Endothelial cell of umbilical vein (primary cell): ENCODE measurements at regions of chr1 and their contacts with region 1.

Region 1: GRCh38 chr1:203216274-203217138 is 13.0 kb downstream of the CHIT1 start:
- DNase-seq: peak; percentile 74
- H3K4me3 ChIP-seq: no peak overlapping the region
- H3K27ac ChIP-seq: no peak overlapping the region
- H3K4me1 ChIP-seq: no peaks in the 10 kb centered on the region
- H3K27me3 ChIP-seq: peaks cover 1 to 6% of the 10 kb centered on the region in 2 experiments
- CTCF ChIP-seq: peak; percentile 61 to 68
- POLR2A ChIP-seq: no peak

Region 2: DNA sequence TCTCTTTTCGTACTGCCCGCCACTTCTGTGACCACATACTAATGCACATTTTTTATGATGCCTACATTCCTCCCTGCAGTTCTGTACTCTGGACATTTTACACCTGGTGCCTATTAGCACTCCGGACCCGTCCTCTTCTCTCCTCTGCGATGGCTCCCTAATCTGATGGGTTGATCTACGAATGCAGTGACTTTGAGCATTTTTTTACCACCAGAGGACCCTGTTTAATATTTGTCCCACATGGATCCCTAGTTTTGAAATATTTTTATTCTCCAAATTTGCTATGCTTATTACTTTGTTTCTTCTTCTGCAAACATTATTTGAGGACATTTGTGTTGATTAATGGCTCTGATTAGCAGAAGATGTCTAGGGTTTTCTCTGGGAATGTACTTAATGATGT is 185.0 kb before region 1 on chr1:
- CTCF ChIA-PET with region 1: interaction called, 42 read pairs
- POLR2A ChIA-PET with region 1: no interaction called
- dilution Hi-C with region 1: no loop called
- intact Hi-C with region 1: no loop called
- DNase-seq: no peak
- H3K4me3 ChIP-seq: no peak overlapping the region
- H3K27ac ChIP-seq: no peak overlapping the region
- H3K4me1 ChIP-seq: peaks cover 5% of the 10 kb centered on the region
- H3K27me3 ChIP-seq: peaks cover 19 to 31% of the 10 kb centered on the region in 2 experiments
- CTCF ChIP-seq: peak; percentile 11 to 31
- POLR2A ChIP-seq: no peak

Region 3: GRCh38 chr1:203084588-203085502 is 131.7 kb before region 1 on chr1:
- CTCF ChIA-PET with region 1: interaction called, 26 read pairs
- POLR2A ChIA-PET with region 1: no interaction called
- dilution Hi-C with region 1: no loop called
- intact Hi-C with region 1: no loop called
- DNase-seq: no peak
- H3K4me3 ChIP-seq: no peak overlapping the region
- H3K27ac ChIP-seq: no peak overlapping the region
- H3K4me1 ChIP-seq: no peaks in the 10 kb centered on the region
- H3K27me3 ChIP-seq: peaks cover 6 to 10% of the 10 kb centered on the region in 2 experiments
- CTCF ChIP-seq: peak; percentile 48 to 50
- POLR2A ChIP-seq: no peak

Region 4: DNA sequence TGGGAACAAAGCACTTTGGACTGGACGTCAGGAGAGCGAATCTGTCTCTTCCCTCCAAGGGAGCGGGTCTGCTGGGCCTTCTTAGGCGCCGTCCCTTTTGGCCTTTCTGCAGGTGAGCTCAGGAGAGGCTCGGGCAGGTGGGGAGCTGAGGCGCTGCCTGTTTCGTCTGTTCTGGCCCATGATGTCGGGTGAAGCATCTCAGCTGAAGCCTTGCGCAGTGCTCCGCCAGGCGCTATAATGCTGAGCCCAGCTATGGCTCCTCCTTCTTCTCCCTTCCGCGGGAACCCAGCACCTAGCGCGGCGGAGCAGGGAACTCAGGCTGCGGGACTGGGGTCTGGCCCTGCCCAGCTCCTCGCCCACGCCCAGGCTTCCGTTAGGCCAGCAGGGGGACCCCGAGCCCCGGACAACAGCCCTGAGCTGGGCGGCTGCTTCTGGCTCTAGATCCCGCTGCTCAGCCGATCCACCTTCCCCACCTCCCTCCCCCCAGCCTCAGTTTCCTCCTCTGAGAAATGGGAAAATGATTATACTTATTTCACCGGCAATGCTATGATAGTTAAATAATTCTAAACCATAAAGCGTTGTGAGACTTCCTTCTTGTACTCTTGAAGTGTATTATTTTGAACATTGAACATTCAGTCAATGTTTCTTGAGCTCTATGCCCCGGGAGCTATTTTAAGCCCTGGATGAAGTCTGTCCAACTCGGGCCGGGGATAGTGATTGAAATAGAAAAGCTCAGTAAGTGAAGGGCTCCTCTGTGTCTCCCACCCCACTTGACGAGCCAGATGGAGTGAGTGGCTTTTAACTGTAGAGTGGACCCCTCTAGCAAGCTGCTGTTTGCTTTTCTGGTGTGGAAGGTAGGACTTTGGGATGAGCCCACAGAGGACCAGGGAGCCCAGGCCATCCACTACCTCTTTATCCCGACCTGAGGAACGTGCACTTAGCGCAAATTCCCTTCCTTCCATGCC is 98.6 kb before region 1 on chr1:
- CTCF ChIA-PET with region 1: interaction called, 341 read pairs
- POLR2A ChIA-PET with region 1: interaction called, 3 read pairs
- dilution Hi-C with region 1: no loop called
- intact Hi-C with region 1: loop called (anchors 1 kb)
- DNase-seq: peak; percentile 51
- H3K4me3 ChIP-seq: no peak overlapping the region
- H3K27ac ChIP-seq: no peak overlapping the region
- H3K4me1 ChIP-seq: no peaks in the 10 kb centered on the region
- H3K27me3 ChIP-seq: peaks cover 19 to 29% of the 10 kb centered on the region in 2 experiments
- CTCF ChIP-seq: peak; percentile 70 to 95
- POLR2A ChIP-seq: no peak

Region 5: GRCh38 chr1:203172128-203173010 is 44.1 kb before region 1 on chr1:
- CTCF ChIA-PET with region 1: interaction called, 37 read pairs
- POLR2A ChIA-PET with region 1: no interaction called
- dilution Hi-C with region 1: no loop called
- intact Hi-C with region 1: loop called (anchors 1 kb)
- DNase-seq: peak; percentile 51
- H3K4me3 ChIP-seq: no peak overlapping the region
- H3K27ac ChIP-seq: no peak overlapping the region
- H3K4me1 ChIP-seq: no peaks in the 10 kb centered on the region
- H3K27me3 ChIP-seq: no peaks in the 10 kb centered on the region
- CTCF ChIP-seq: peak; percentile 84 to 96
- POLR2A ChIP-seq: no peak

Region 6: GRCh38 chr1:203229471-203230135 is 13.1 kb after region 1 on chr1 and contains the start of gene CHIT1:
- CTCF ChIA-PET with region 1: interaction called, 20 read pairs
- POLR2A ChIA-PET with region 1: no interaction called
- dilution Hi-C with region 1: no loop called
- intact Hi-C with region 1: no loop called
- DNase-seq: no peak
- H3K4me3 ChIP-seq: no peak within 1 kb of the TSS
- H3K27ac ChIP-seq: no peak within 1 kb of the TSS
- H3K4me1 ChIP-seq: no peaks in the 10 kb centered on the region
- H3K27me3 ChIP-seq: peaks cover 14 to 16% of the 10 kb centered on the region in 2 experiments
- CTCF ChIP-seq: no peak
- POLR2A ChIP-seq: no peak
- total RNA-seq, gene CHIT1: not detected in 2 replicates

Region 7: GRCh38 chr1:203368624-203369451 is 152.3 kb after region 1 on chr1:
- CTCF ChIA-PET with region 1: no interaction called
- POLR2A ChIA-PET with region 1: no interaction called
- dilution Hi-C with region 1: no loop called
- intact Hi-C with region 1: no loop called
- DNase-seq: peak; percentile 47
- H3K4me3 ChIP-seq: no peak overlapping the region
- H3K27ac ChIP-seq: no peak overlapping the region
- H3K4me1 ChIP-seq: no peaks in the 10 kb centered on the region
- H3K27me3 ChIP-seq: peaks cover 27 to 46% of the 10 kb centered on the region in 2 experiments
- CTCF ChIP-seq: peak in 1 of 2 donors; percentile 20
- POLR2A ChIP-seq: no peak